ENCODE measurements at regions of chr11 and their contacts with region 1.

Region 1: GRCh38 chr11:554824-555472 is 5.6 kb downstream of the LMNTD2 start:
- DNase-seq: peak; percentile 57 to 92 (median 77)
- ATAC-seq: peak; percentile 80
- H3K4me3 ChIP-seq: peak overlapping the region; percentile 48
- H3K4me3 Mint-ChIP-seq: peak overlapping the region; percentile 34
- H3K27ac ChIP-seq: no peak overlapping the region
- H3K27ac Mint-ChIP-seq: no peak overlapping the region
- H3K4me1 ChIP-seq: peaks cover 34% of the 10 kb centered on the region
- H3K4me1 Mint-ChIP-seq: peaks cover 4% of the 10 kb centered on the region
- H3K27me3 ChIP-seq: no peaks in the 10 kb centered on the region
- H3K27me3 Mint-ChIP-seq: no peaks in the 10 kb centered on the region
- CTCF ChIP-seq: peak; percentile 53

Region 2: DNA sequence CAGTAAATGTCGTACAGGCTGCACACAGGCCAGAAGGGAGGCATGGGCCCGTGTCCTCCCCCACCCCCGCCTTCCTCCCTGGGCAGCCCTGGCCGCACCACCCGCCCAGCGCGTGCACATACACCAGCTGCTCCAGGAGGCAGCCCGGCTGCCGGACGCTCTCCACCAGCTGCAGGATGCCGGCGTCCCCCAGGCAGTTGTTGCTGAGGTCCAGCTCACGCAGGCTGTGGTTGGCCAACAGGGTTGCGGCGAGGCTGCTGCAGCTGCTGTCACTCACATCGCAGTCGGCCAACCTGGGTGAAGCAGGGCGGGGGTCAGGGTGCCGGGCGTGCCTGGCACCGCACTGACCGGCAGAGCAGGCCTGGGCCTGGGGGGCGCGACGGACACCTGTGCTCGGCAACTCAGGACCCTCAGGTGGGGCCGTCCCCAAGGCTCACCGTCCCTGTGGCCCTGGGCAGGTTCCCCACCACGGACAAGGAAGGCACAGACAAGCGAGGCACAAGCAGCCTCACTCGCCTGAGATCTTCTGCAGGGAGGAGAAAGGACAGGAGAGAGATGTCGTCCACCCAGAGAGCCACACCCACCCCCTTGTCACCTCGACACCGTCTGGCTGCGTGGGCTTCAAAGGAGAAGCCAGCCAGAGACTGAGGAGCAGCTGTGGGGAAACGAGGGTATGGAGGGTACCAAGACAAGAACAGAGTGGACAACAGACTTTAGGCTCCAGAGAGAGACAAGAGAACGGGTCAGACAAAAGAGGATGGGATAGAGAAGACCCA is 60.0 kb before region 1 on chr11:
- CTCF ChIA-PET with region 1: no interaction called
- POLR2A ChIA-PET with region 1: no interaction called
- intact Hi-C with region 1: no loop called
- DNase-seq: no peak
- ATAC-seq: no peak
- H3K4me3 ChIP-seq: no peak overlapping the region
- H3K4me3 Mint-ChIP-seq: no peak overlapping the region
- H3K27ac ChIP-seq: no peak overlapping the region
- H3K27ac Mint-ChIP-seq: no peak overlapping the region
- H3K4me1 ChIP-seq: no peaks in the 10 kb centered on the region
- H3K4me1 Mint-ChIP-seq: no peaks in the 10 kb centered on the region
- H3K27me3 ChIP-seq: no peaks in the 10 kb centered on the region
- H3K27me3 Mint-ChIP-seq: no peaks in the 10 kb centered on the region
- CTCF ChIP-seq: no peak

Region 3: DNA sequence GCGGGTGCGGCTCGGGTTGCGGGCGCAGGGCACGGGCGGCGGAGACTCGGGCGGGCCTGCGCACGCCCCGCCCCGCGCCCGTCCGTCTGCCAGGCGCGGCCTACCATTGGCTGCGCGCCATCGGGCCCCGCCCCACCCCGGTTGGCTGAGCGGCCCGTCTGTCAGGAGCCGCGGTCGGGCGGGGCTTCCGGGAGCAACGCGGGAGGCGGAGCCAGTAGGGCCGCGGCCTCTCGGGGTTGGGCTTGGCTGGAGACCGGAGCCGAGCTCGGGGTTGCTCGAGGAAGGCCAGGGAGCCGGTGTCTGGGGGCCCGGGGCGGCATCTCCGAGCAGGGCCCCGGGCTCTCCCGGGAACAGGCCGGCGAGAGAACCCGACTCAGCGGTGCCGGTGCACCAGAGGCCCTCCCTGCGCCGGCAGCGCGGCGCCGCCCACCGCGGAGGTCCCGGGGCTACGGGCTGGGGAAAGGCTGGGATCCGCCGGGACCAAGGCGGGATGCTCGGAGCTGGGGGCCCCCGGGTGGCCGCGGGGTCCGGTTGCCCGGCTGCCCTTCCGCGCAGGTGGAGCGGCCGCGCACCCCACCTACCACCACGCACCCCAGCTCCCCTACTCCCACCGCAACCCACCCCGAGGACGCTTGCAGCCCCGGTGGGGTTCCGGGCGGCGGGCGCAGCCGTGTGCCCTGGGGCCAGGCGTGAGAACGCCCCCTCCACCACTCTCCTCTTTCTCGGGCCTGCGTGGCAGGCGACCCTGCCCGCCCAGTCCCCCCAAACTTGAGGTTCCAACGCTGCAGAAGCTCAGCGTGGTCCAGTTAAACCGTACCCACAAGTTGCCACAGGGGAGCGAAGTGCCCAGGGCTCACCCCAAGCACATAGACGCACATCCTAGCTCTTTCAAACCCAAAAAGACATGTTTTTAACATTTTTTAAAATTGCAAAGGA is 19.2 kb before region 1 on chr11 and contains the start of gene HRAS:
- CTCF ChIA-PET with region 1: interaction called, 3 read pairs
- POLR2A ChIA-PET with region 1: interaction called, 18 read pairs
- intact Hi-C with region 1: loop called in 1 of 2 experiments (anchors 2 kb)
- DNase-seq: peak; percentile 89 to 99 (median 96)
- ATAC-seq: peak; percentile 90
- H3K4me3 ChIP-seq: peak within 1 kb of the TSS; percentile 71
- H3K4me3 Mint-ChIP-seq: peak within 1 kb of the TSS; percentile 98
- H3K27ac ChIP-seq: peak within 1 kb of the TSS; percentile 73 to 79
- H3K27ac Mint-ChIP-seq: peak within 1 kb of the TSS; percentile 93
- H3K4me1 ChIP-seq: peaks cover 44% of the 10 kb centered on the region
- H3K4me1 Mint-ChIP-seq: peaks cover 16% of the 10 kb centered on the region
- H3K27me3 ChIP-seq: no peaks in the 10 kb centered on the region
- H3K27me3 Mint-ChIP-seq: no peaks in the 10 kb centered on the region
- CTCF ChIP-seq: no peak
- total RNA-seq, gene HRAS: 23.7 to 23.9 TPM

Region 4: GRCh38 chr11:568306-569157 is 13.6 kb after region 1 on chr11:
- CTCF ChIA-PET with region 1: interaction called, 9 read pairs
- POLR2A ChIA-PET with region 1: interaction called, 21 read pairs
- intact Hi-C with region 1: loop called in 1 of 2 experiments (anchors 1 kb)
- DNase-seq: peak; percentile 81 to 97 (median 90)
- ATAC-seq: peak; percentile 91
- H3K4me3 ChIP-seq: peak overlapping the region; percentile 70
- H3K4me3 Mint-ChIP-seq: peak overlapping the region; percentile 82
- H3K27ac ChIP-seq: peak overlapping the region; percentile 17 to 69
- H3K27ac Mint-ChIP-seq: no peak overlapping the region
- H3K4me1 ChIP-seq: peaks cover 14% of the 10 kb centered on the region
- H3K4me1 Mint-ChIP-seq: peaks cover 4% of the 10 kb centered on the region
- H3K27me3 ChIP-seq: no peaks in the 10 kb centered on the region
- H3K27me3 Mint-ChIP-seq: no peaks in the 10 kb centered on the region
- CTCF ChIP-seq: no peak

Region 5: DNA sequence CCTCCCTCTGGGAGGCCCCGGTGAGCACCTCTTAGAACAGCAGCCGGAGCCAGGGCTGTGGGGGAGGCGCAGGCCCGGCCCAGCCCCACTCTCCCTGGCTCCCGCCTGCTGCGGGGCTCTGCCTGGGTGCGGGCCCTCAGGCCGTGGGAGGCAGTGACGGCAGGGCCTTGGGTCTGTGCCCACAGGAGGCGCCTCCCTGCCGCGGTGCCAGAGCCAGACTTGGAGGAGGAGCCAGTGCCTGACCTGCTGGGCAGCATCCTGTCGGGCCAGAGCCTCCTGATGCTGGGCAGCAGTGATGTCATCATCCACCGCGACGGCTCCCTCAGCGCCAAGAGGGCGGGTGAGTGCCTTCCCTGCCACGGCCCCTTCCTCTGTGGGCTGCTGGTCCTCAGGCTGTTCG is 51.3 kb after region 1 on chr11:
- CTCF ChIA-PET with region 1: no interaction called
- POLR2A ChIA-PET with region 1: no interaction called
- intact Hi-C with region 1: no loop called
- DNase-seq: no peak
- ATAC-seq: no peak
- H3K4me3 ChIP-seq: no peak overlapping the region
- H3K4me3 Mint-ChIP-seq: no peak overlapping the region
- H3K27ac ChIP-seq: no peak overlapping the region
- H3K27ac Mint-ChIP-seq: no peak overlapping the region
- H3K4me1 ChIP-seq: no peaks in the 10 kb centered on the region
- H3K4me1 Mint-ChIP-seq: no peaks in the 10 kb centered on the region
- H3K27me3 ChIP-seq: no peaks in the 10 kb centered on the region
- H3K27me3 Mint-ChIP-seq: no peaks in the 10 kb centered on the region
- CTCF ChIP-seq: no peak

Region 6: DNA sequence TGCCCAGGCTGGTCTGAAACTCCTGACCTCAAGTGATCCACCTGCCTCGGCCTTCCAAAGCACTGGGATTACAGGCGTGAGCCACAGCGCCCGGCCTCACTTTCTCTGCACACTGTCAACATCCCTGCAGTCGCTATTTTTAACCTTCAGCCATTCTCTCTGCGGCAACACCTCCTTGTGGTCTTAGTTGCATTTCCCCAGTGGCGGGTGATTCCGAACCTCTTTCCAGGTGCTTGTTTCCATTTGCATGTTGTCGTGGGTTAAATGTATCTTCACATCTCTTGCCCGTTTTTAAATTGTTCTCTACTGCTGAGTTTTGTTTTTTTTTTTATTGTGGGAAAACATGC is 74.3 kb after region 1 on chr11:
- CTCF ChIA-PET with region 1: interaction called, 3 read pairs
- POLR2A ChIA-PET with region 1: no interaction called
- intact Hi-C with region 1: loop called (anchors 1 to 2 kb)
- DNase-seq: peak in 4 of 14 experiments; percentile 37 to 57 (median 49)
- ATAC-seq: peak; percentile 55
- H3K4me3 ChIP-seq: no peak overlapping the region
- H3K4me3 Mint-ChIP-seq: no peak overlapping the region
- H3K27ac ChIP-seq: no peak overlapping the region
- H3K27ac Mint-ChIP-seq: no peak overlapping the region
- H3K4me1 ChIP-seq: peaks cover 22% of the 10 kb centered on the region
- H3K4me1 Mint-ChIP-seq: peaks cover 16% of the 10 kb centered on the region
- H3K27me3 ChIP-seq: peaks cover 19 to 25% of the 10 kb centered on the region in 2 experiments
- H3K27me3 Mint-ChIP-seq: peaks cover 30% of the 10 kb centered on the region
- CTCF ChIP-seq: no peak

Region 7: DNA sequence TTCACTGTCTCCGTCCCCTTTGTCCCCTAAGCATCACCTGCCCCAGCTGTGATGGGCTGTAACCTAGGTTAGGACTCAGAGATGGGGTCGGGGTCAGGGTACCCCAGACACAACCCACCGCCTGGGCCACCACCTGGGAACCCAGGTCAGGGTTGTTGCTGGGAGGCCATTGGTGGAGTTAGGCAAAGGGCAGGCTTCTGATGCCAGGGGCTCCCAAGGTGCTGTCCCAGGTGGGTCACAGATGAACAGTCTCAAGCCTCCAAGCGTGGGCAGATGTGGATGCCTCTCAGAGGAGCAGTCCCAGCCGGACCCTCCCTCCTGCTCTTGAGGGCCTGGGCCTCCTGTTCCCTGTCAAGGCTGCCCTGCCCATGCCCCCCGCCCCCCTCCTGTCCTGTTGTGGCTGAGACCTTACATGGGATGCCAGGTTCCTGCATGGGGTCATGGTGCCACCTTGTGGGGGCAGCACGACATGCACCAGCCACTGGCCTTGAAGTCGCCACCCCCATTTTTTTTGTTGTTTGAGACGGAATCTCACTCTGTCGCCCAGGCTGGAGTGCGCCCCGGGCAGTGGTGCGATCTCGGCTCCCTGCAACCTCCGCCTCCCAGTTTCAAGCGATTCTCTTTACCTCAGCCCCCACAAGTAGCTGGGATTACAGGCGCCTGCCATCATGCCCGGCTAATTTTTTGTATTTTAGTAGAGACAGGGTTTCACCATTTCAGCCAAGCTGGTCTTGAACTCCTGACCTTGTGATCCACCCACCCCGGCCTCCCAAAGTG is 210.3 kb after region 1 on chr11:
- CTCF ChIA-PET with region 1: no interaction called
- POLR2A ChIA-PET with region 1: no interaction called
- intact Hi-C with region 1: loop called (anchors 1 to 2 kb)
- DNase-seq: peak; percentile 55 to 83 (median 66)
- ATAC-seq: peak; percentile 95
- H3K4me3 ChIP-seq: no peak overlapping the region
- H3K4me3 Mint-ChIP-seq: no peak overlapping the region
- H3K27ac ChIP-seq: no peak overlapping the region
- H3K27ac Mint-ChIP-seq: no peak overlapping the region
- H3K4me1 ChIP-seq: peaks cover 4% of the 10 kb centered on the region
- H3K4me1 Mint-ChIP-seq: no peaks in the 10 kb centered on the region
- H3K27me3 ChIP-seq: no peaks in the 10 kb centered on the region
- H3K27me3 Mint-ChIP-seq: no peaks in the 10 kb centered on the region
- CTCF ChIP-seq: peak; percentile 66